Body of pancreas (tissue), 4 donors: ENCODE measurements at regions of chr4 and their contacts with region 1.

Region 1: GRCh38 chr4:69881173-69881773 is 21.3 kb upstream of the SULT1E1 start:
- DNase-seq: peak; percentile 29 to 61 (median 52)
- ATAC-seq: peak; percentile 92
- H3K4me3 ChIP-seq: no peak overlapping the region
- H3K27ac ChIP-seq: no peak overlapping the region
- H3K4me1 ChIP-seq: peaks cover under 1% of the 10 kb centered on the region
- H3K27me3 ChIP-seq: no peaks in the 10 kb centered on the region
- CTCF ChIP-seq: peak; percentile 62 to 96 (median 90)
- POLR2A ChIP-seq: no peak

Region 2: DNA sequence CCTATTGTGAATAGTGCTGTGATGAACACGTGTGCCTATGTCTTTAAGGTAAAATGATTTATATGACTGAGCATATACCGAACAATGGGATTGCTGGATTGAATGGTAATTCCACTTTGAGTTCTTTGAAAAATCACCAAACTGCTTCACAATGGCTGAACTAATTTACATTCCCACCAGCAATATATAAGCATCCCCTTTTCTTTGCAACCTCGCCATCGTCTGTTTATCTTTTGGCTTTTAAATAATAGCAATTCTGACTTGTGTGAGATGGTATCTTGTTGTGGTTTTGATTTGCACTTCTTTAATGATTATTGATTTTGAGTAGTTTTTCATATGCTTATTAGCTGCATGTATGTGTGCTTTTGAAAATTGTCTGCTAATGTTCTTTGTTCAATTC is 196.5 kb before region 1 on chr4:
- intact Hi-C with region 1: loop called (anchors 5 kb)
- DNase-seq: no peak
- ATAC-seq: no peak
- H3K4me3 ChIP-seq: no peak overlapping the region
- H3K27ac ChIP-seq: no peak overlapping the region
- H3K4me1 ChIP-seq: no peaks in the 10 kb centered on the region
- H3K27me3 ChIP-seq: no peaks in the 10 kb centered on the region
- CTCF ChIP-seq: no peak
- POLR2A ChIP-seq: no peak

Region 3: GRCh38 chr4:69697536-69698242 is 183.6 kb before region 1 on chr4:
- intact Hi-C with region 1: loop called (anchors 5 kb)
- DNase-seq: no peak
- ATAC-seq: no peak
- H3K4me3 ChIP-seq: no peak overlapping the region
- H3K27ac ChIP-seq: no peak overlapping the region
- H3K4me1 ChIP-seq: no peaks in the 10 kb centered on the region
- H3K27me3 ChIP-seq: no peaks in the 10 kb centered on the region
- CTCF ChIP-seq: no peak
- POLR2A ChIP-seq: no peak

Region 4: DNA sequence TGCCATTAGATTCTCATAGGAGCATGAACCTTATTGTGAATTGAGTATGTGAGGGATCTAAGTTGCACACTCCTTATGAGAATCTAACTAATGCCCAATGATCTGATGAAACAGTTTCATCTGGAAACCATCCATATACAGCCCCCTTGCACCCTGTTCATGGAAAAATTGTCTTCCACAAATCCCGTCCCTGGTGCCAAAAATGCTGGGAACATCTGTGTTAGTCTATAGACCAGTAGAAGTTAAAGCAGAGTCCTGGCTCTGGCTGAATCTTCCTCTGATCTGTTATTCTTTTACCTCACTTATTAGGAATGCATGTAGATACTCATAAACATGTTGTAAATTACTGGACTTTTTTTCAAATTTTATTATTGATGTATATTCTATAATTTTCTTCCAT is 150.0 kb before region 1 on chr4:
- intact Hi-C with region 1: no loop called
- DNase-seq: no peak
- ATAC-seq: no peak
- H3K4me3 ChIP-seq: no peak overlapping the region
- H3K27ac ChIP-seq: no peak overlapping the region
- H3K4me1 ChIP-seq: no peaks in the 10 kb centered on the region
- H3K27me3 ChIP-seq: no peaks in the 10 kb centered on the region
- CTCF ChIP-seq: no peak
- POLR2A ChIP-seq: no peak